Activated CD4-positive, alpha-beta T cell treated with anti-CD3 and anti-CD28 coated beads, Interleukin-2, amount 10 ng/mL, durations not matched to agents 24 days and 14 days (primary cell): ENCODE measurements at regions of chr19 and their contacts with region 1.

Region 1: GRCh38 chr19:53431399-53432087 is at the start of gene ZNF761:
- DNase-seq: peak; percentile 99
- H3K4me3 Mint-ChIP-seq: peak within 1 kb of the TSS; percentile 90
- H3K27ac Mint-ChIP-seq: peak within 1 kb of the TSS; percentile 93
- H3K4me1 Mint-ChIP-seq: peaks cover 16% of the 10 kb centered on the region
- H3K27me3 Mint-ChIP-seq: no peaks in the 10 kb centered on the region
- total RNA-seq, gene ZNF761: 9.8 and 11.6 TPM in 2 replicates

Region 2: DNA sequence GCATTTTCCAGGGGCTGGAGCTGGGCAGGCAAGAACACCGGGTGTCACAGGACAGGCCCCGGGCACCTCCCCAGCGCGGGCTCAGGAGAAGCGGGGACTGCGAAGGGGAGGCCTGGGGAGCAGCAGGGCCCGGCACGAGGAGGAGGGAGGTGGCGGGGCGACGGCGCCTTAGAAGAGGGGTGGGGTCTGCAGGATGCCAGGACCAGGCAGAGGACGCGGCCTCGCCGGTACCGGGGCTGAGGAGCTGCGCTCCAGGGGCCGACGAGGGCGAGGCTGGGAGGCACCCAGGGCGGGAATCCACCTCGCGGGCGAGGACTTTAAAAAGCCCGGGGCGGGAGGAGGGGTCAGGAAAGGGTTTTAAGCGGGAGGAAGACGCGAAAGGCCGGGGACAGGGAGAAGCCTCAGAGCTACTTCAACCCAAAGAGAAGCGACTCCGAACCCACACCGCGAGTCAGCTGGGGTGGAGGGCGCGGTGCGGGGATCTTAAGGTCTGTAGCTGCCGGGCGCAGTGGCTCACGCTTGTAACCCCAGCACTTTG is 273.4 kb before region 1 on chr19:
- intact Hi-C with region 1: no loop called
- DNase-seq: peak; percentile 75
- H3K4me3 Mint-ChIP-seq: peak overlapping the region; percentile 87
- H3K27ac Mint-ChIP-seq: peak overlapping the region; percentile 73
- H3K4me1 Mint-ChIP-seq: peaks cover 12% of the 10 kb centered on the region
- H3K27me3 Mint-ChIP-seq: no peaks in the 10 kb centered on the region

Region 3: GRCh38 chr19:53333463-53334449 is 97.8 kb before region 1 on chr19 and contains the start of gene ZNF845:
- intact Hi-C with region 1: loop called (anchors 1 kb)
- DNase-seq: peak; percentile 99
- H3K4me3 Mint-ChIP-seq: peak within 1 kb of the TSS; percentile 89
- H3K27ac Mint-ChIP-seq: peak within 1 kb of the TSS; percentile 88
- H3K4me1 Mint-ChIP-seq: peaks cover 11% of the 10 kb centered on the region
- H3K27me3 Mint-ChIP-seq: no peaks in the 10 kb centered on the region
- total RNA-seq, gene ZNF845: 6.1 and 6.4 TPM in 2 replicates

Region 4: GRCh38 chr19:53394974-53395839 is 36.3 kb before region 1 on chr19 and contains the start of gene ZNF765:
- intact Hi-C with region 1: loop called (anchors 1 kb)
- DNase-seq: peak; percentile 99
- H3K4me3 Mint-ChIP-seq: peak within 1 kb of the TSS; percentile 94
- H3K27ac Mint-ChIP-seq: peak within 1 kb of the TSS; percentile 93
- H3K4me1 Mint-ChIP-seq: peaks cover 16% of the 10 kb centered on the region
- H3K27me3 Mint-ChIP-seq: no peaks in the 10 kb centered on the region
- total RNA-seq, gene ZNF765: 11.0 and 11.8 TPM in 2 replicates

Region 5: GRCh38 chr19:53467485-53468262 is 36.1 kb after region 1 on chr19 and contains the start of gene ZNF813:
- intact Hi-C with region 1: loop called (anchors 2 kb)
- DNase-seq: peak; percentile 98
- H3K4me3 Mint-ChIP-seq: peak within 1 kb of the TSS; percentile 92
- H3K27ac Mint-ChIP-seq: peak within 1 kb of the TSS; percentile 87
- H3K4me1 Mint-ChIP-seq: peaks cover 16% of the 10 kb centered on the region
- H3K27me3 Mint-ChIP-seq: peaks cover 2% of the 10 kb centered on the region
- total RNA-seq, gene ZNF813: 4.3 and 5.2 TPM in 2 replicates

Region 6: DNA sequence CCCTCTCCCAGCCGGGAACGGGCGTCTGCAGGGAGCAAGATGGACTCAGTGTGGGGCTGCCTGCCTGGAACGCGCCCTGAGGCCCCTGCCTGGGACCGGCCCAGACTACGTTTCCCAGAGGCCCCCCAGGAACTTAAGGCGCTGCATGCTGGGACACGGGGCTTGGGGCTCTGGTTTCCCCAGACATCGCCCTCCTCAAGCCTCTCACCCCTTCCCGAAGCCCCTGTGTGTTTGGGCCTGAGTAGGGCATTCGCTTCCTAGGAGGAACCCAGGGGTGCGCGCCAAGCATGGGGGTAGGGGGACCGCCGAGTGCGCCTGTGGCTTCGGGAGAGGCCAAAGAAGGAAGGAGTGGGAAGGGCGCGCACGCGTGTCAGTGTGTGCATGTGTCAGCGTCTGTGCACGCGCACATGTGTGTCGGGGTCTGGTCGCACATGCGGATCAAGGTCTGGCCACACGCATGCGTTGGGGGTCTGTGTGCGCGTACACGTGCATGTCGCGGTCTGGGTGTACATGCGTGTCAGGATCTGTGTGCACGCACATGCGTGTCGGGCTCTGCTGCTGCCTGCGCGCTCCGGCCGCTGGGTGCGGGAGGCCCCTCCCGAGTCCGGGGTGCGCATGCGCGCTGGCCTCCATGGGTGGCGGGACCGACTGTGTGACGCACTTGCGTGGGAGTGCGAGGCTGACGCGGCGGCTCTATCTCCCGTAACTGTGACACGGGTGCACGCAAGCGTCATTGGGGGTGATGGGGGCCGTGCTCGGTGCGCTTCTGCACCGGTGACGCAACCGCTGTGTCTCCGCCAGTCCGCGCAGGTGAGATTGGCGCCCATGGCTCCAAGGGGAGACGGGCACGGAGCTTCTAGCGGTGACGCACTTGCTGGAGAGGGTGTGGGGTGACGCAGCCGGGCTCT is 122.6 kb after region 1 on chr19:
- intact Hi-C with region 1: loop called (anchors 1 kb)
- DNase-seq: peak; percentile 97
- H3K4me3 Mint-ChIP-seq: peak overlapping the region; percentile 93
- H3K27ac Mint-ChIP-seq: peak overlapping the region; percentile 97
- H3K4me1 Mint-ChIP-seq: peaks cover 18% of the 10 kb centered on the region
- H3K27me3 Mint-ChIP-seq: no peaks in the 10 kb centered on the region